ENCODE measurements at regions of chr4 and their contacts with region 1.

Region 1: DNA sequence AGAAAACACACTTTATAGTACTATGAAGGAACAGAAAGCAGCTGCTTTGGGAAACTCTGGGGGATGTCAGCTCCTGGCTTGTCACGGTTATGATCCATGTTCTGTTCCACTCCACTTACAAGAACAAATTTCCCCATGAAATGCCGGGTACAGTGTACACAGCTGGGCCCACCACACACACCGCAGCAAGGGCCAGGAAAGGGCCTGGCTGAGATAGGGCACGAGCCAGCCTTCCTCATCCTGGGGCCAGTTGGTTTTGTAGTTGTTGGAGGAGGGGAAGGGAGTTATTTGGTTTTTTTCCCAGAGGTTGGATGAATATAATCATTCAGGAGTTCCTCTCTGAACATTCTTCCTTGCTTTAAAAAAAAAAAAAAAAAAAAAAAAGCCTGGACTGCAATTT is 56.8 kb downstream of the SEPSECS start:
- DNase-seq: peak; percentile 56
- ATAC-seq: peak; percentile 35 to 44

Region 2: DNA sequence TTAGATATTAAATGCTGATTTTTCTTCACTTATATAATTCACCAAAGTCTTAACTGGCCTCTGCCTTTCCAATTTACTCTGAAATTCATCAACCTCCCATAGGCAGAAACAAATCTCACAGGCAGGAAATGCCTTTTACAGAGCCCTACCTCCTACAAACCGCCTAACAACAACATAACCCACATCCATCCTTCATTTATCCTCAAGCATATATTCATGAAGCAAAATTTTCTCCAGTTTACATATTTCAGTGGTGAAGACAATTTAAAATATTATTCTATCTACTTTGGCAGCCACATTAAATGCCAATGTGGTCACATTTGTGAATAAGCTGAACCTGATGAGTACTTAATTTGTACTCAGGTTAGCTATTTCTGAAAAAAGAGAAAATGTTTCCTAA is 26.5 kb after region 1 on chr4:
- intact Hi-C with region 1: loop called in 1 of 2 experiments (anchors 5 kb)
- DNase-seq: no peak
- ATAC-seq: no peak